Heart right ventricle (tissue), 16 donors: ENCODE measurements at regions of chr11 and their contacts with region 1.

Region 1: GRCh38 chr11:47980245-47981049 is at the start of gene PTPRJ:
- DNase-seq: peak; percentile 46 to 59
- ATAC-seq: peak; percentile 59 to 75 (median 68)
- H3K4me3 ChIP-seq: peak within 1 kb of the TSS; percentile 19 to 93 (median 80)
- H3K27ac ChIP-seq: peak within 1 kb of the TSS in 9 of 10 donors; percentile 42 to 96 (median 64)
- H3K4me1 ChIP-seq: peaks cover 7 to 45% (median 13%) of the 10 kb centered on the region in 9 donors
- H3K27me3 ChIP-seq: peaks cover 0 to 14% (median 4%) of the 10 kb centered on the region in 7 donors
- CTCF ChIP-seq: peak in 1 of 9 donors; percentile 3
- total RNA-seq, gene PTPRJ: 5.6 to 22.9 (median 7.5) TPM

Region 2: DNA sequence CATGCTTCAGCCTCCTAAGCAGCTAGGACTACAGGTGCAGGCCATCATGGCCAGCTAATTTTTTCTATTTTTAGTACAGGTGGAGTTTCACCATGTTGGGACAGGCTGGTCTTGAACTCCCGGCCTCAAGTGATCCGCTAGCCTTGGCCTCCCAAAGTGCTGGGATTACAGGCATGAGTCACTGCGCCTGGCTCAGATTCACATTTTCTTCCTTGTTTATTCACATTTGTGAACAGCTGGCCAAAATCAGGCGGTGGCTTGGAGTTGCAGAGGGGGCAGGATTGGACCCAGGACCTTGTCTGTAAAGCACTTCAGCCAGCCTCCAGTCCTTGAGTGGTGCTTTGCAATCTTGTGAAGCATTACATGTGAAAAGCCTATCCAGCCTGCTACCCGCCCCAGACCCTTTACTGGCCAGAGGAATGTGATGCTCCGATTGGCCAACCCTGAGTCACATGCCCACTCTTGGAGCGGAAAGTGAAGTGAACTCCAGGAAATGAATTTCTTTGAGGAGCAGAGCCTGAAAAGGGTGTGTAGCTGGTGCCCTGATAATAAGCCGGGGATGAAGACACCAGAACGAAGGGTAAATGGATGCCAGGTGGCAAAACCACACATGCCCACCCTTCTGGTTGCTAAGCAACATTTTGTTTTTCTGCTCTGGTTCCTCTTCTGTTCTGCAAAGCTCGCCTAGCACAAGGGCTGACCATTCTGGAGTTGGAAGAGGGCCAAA is 62.6 kb before region 1 on chr11:
- intact Hi-C with region 1: no loop called
- DNase-seq: peak; percentile 65 to 82
- ATAC-seq: peak; percentile 76 to 93 (median 88)
- H3K4me3 ChIP-seq: peak overlapping the region in 6 of 10 donors; percentile 14 to 32 (median 27)
- H3K27ac ChIP-seq: peak overlapping the region in 9 of 10 donors; percentile 24 to 79 (median 57)
- H3K4me1 ChIP-seq: peaks cover 0 to 66% (median 32%) of the 10 kb centered on the region in 9 donors
- H3K27me3 ChIP-seq: no peaks in the 10 kb centered on the region
- CTCF ChIP-seq: no peak

Region 3: DNA sequence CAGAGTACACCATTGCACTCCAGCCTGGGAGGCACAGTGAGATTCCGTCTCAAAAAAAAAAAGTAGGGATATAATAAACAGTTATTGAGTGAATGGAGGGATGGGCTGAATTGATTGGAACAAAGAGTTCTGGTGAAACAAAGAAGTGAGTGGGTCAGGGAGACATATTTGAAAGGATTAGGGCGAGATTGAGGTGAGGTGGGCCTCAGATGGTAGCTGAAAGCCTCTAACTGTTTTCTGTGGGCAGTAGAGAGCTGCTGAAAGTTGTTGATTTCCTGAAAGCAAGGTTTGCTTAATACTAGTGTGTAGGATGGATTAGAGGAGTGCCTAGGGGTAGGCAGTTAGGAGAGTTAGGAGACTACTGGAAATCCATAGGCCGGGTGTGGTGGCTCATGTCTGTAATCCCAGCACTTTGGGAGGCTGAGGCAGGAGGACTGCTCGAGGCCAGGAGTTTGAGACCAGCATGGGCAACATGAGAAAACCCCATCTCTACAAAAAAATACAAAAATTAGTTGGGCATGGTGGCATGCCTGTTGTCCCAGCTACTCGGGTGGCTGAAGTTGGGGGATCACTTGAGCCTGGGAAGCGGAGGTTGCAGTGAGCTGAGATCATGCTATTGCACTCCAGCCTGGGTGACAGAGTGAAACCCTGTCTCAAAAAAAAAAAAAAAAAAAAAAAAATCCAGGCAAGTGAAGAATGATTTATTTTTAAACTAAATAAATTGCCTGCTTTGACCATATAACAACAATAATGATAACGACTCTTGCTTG is 41.5 kb before region 1 on chr11:
- intact Hi-C with region 1: loop called in 1 of 10 experiments (anchors 5 kb)
- DNase-seq: no peak
- ATAC-seq: no peak
- H3K4me3 ChIP-seq: no peak overlapping the region
- H3K27ac ChIP-seq: no peak overlapping the region
- H3K4me1 ChIP-seq: peaks cover 0 to 33% (median 0%) of the 10 kb centered on the region in 9 donors
- H3K27me3 ChIP-seq: no peaks in the 10 kb centered on the region
- CTCF ChIP-seq: no peak

Region 4: GRCh38 chr11:48103621-48104562 is 123.4 kb after region 1 on chr11:
- intact Hi-C with region 1: loop called in 4 of 10 experiments (anchors 5 kb)
- DNase-seq: no peak
- ATAC-seq: peak in 4 of 8 donors; percentile 49 to 72 (median 63)
- H3K4me3 ChIP-seq: no peak overlapping the region
- H3K27ac ChIP-seq: peak overlapping the region in 7 of 10 donors; percentile 52 to 67 (median 60)
- H3K4me1 ChIP-seq: peaks cover 6 to 92% (median 39%) of the 10 kb centered on the region in 9 donors
- H3K27me3 ChIP-seq: no peaks in the 10 kb centered on the region
- CTCF ChIP-seq: no peak

Region 5: DNA sequence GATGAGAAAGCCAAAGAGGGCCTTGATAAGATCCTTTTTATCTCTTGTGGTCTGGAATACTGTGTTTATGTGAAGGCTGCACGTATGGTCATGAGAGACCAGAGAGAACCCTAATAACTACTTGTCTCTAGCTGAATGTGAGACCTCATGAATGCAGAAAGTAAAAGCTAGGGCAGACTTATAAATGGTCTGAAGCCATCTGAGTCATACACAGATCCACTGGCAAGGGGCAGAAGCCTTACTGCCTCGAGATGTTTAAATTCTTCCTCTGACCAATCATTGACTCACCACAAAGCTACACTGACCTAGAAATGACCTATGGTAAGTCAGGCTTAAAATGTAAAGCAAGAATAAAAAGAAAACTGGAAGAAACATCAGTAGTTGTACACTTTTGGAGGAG is 213.4 kb after region 1 on chr11:
- intact Hi-C with region 1: no loop called
- DNase-seq: no peak
- ATAC-seq: no peak
- H3K4me3 ChIP-seq: no peak overlapping the region
- H3K27ac ChIP-seq: no peak overlapping the region
- H3K4me1 ChIP-seq: no peaks in the 10 kb centered on the region
- H3K27me3 ChIP-seq: no peaks in the 10 kb centered on the region
- CTCF ChIP-seq: no peak